ENCODE measurements at regions of chr18 and their contacts with region 1.

Region 1: GRCh38 chr18:70454704-70455322 is 166.0 kb downstream of the SOCS6 start:
- DNase-seq: no peak
- ATAC-seq: peak; percentile 42
- H3K4me3 Mint-ChIP-seq: no peak overlapping the region
- H3K27ac Mint-ChIP-seq: no peak overlapping the region
- H3K4me1 Mint-ChIP-seq: no peaks in the 10 kb centered on the region
- H3K27me3 Mint-ChIP-seq: peaks cover 4% of the 10 kb centered on the region
- CTCF ChIP-seq: no peak

Region 2: DNA sequence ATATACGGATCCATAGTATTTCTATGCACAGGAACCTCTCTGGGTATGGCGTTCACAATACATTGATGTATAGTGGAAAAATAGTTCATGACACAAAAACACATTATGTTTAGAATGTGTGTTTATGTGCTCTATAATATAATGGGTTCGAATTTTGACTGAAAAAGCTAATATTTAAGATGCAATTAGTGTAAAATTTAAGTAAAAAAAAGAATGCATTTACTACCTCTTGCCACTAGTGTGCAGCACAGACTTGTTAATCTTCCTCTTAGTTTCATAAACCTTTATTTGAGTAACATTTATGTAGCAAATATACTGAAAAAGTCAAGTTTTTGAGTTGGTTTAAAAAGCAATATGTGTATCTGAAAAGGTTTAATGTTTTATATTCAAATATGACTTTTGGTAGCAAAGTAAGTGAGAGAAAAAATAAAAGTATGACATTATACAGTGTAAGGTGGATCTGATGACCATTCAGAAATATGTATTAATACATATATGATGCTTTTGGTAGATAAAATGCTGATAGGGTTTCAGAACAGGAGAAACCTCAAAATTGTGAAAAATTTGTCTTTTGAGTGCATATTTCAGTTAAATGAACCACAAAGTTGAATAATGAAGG is 1607.5 kb before region 1 on chr18:
- CTCF ChIA-PET with region 1: no interaction called
- POLR2A ChIA-PET with region 1: no interaction called
- intact Hi-C with region 1: loop called (anchors 1 kb)
- DNase-seq: no peak
- ATAC-seq: no peak
- H3K4me3 Mint-ChIP-seq: no peak overlapping the region
- H3K27ac Mint-ChIP-seq: no peak overlapping the region
- H3K4me1 Mint-ChIP-seq: no peaks in the 10 kb centered on the region
- H3K27me3 Mint-ChIP-seq: no peaks in the 10 kb centered on the region
- CTCF ChIP-seq: no peak

Region 3: GRCh38 chr18:70195852-70196434 is 258.9 kb before region 1 on chr18:
- CTCF ChIA-PET with region 1: interaction called, 12 read pairs
- POLR2A ChIA-PET with region 1: no interaction called
- intact Hi-C with region 1: loop called (anchors 1 kb)
- DNase-seq: no peak
- ATAC-seq: peak; percentile 41
- H3K4me3 Mint-ChIP-seq: no peak overlapping the region
- H3K27ac Mint-ChIP-seq: no peak overlapping the region
- H3K4me1 Mint-ChIP-seq: peaks cover 17% of the 10 kb centered on the region
- H3K27me3 Mint-ChIP-seq: no peaks in the 10 kb centered on the region
- CTCF ChIP-seq: peak; percentile 76

Region 4: DNA sequence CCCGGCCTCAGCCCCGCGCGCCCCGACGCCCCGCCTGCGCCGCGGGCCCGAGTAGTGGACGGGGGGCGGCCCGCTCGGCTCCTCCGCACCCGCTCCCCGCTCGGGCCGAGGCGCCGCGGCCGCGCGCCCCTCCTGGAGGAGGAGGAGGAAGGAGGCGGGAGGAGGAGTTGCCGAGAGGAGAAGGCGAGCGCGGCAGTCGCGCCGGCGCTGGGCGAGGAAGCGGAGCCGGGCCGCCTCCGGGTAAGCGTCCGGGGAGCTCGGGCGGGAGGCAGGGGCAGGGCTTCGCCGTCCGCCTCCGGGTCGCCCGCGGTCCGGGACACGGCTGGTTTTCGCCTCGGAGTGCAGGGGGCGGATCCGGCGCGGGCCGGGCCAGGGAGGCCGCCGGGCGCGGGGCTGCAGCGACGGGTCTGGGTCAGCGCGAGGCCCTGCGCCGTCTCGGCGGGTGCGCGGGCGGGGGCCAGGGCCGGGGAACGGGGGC is 165.9 kb before region 1 on chr18 and contains the start of gene SOCS6:
- CTCF ChIA-PET with region 1: no interaction called
- POLR2A ChIA-PET with region 1: no interaction called
- intact Hi-C with region 1: loop called (anchors 5 kb)
- DNase-seq: peak; percentile 29
- ATAC-seq: peak; percentile 64
- H3K4me3 Mint-ChIP-seq: peak within 1 kb of the TSS; percentile 82
- H3K27ac Mint-ChIP-seq: no peak within 1 kb of the TSS
- H3K4me1 Mint-ChIP-seq: peaks cover 13% of the 10 kb centered on the region
- H3K27me3 Mint-ChIP-seq: peaks cover 24% of the 10 kb centered on the region
- CTCF ChIP-seq: no peak
- total RNA-seq, gene SOCS6: 1.1 and 1.6 TPM in 2 replicates